Posterior vena cava (tissue), 2 donors: ENCODE measurements at regions of chr10 and their contacts with region 1.

Region 1: GRCh38 chr10:60853107-60853506 is 74.8 kb downstream of the CDK1 start:
- DNase-seq: no peak

Region 2: GRCh38 chr10:60907236-60907635 is 54.1 kb after region 1 on chr10:
- intact Hi-C with region 1: loop called in 1 of 2 experiments (anchors 2 kb)
- DNase-seq: no peak